Mammary epithelial cell (primary cell): ENCODE measurements at regions of chr9 and their contacts with region 1.

Region 1: GRCh38 chr9:95127249-95128176 is 190.0 kb downstream of the FANCC start:
- DNase-seq: peak; percentile 65
- H3K4me3 ChIP-seq: peak overlapping the region; percentile 6 to 44 (median 29)
- H3K27ac ChIP-seq: no peak overlapping the region
- H3K4me1 ChIP-seq: peaks cover 5% of the 10 kb centered on the region
- H3K27me3 ChIP-seq: no peaks in the 10 kb centered on the region
- CTCF ChIP-seq: peak; percentile 94 to 100

Region 2: GRCh38 chr9:94554439-94555391 is 572.8 kb before region 1 on chr9 and contains the start of gene PCAT7:
- CTCF ChIA-PET with region 1: no interaction called
- dilution Hi-C with region 1: no loop called
- in situ Hi-C with region 1: no loop called
- intact Hi-C with region 1: loop called (anchors 1 kb)
- DNase-seq: no peak
- H3K4me3 ChIP-seq: no peak within 1 kb of the TSS
- H3K27ac ChIP-seq: no peak within 1 kb of the TSS
- H3K4me1 ChIP-seq: no peaks in the 10 kb centered on the region
- H3K27me3 ChIP-seq: no peaks in the 10 kb centered on the region
- CTCF ChIP-seq: peak; percentile 19 to 52
- total RNA-seq, gene PCAT7: 0.17 TPM in 1 of 2 donors, not detected in the other

Region 3: DNA sequence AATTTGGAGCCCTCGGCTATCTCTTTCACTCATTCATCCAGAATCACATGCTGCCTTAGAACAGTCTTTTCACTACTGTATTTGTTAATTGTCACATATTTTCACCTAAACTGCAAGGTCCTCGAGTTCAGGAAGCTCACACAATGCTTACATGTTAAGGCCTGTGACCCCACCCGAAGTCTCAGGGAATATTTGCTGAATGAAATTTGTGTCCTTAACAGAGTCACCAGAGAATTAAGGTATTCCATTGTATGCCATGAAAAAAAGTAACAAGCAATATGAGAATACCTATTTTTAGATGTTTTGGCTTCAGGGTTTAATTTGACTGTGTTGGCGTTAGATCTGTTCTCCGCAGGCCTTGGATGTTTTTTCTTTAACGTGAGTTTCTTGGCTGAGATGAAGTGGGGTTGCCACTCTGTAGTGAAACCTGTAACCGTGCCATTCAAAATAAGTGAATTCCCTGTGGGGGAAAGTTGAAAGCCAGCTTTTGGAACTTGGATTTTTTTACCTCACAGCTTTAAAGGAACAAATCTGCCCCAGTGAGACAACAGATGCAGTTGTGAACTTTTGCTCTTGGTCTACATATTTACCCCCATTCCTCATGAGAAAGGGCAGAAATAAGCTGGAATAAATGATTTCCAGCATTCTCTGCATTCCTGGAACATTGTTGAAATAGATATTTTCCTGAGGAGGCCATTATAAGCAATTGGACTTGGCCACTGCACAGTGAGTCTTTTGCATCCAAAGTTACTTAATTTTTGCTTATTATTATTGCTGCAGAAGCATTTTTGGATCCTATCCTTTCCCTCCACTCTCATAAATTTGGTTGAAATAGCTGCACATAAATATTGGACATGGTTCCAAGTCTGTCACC is 452.3 kb before region 1 on chr9:
- CTCF ChIA-PET with region 1: no interaction called
- dilution Hi-C with region 1: loop called (anchors 25 kb)
- in situ Hi-C with region 1: loop called (anchors 5 kb)
- intact Hi-C with region 1: no loop called
- DNase-seq: no peak
- H3K4me3 ChIP-seq: no peak overlapping the region
- H3K27ac ChIP-seq: peak overlapping the region; percentile 6
- H3K4me1 ChIP-seq: peaks cover 22% of the 10 kb centered on the region
- H3K27me3 ChIP-seq: no peaks in the 10 kb centered on the region
- CTCF ChIP-seq: no peak

Region 4: DNA sequence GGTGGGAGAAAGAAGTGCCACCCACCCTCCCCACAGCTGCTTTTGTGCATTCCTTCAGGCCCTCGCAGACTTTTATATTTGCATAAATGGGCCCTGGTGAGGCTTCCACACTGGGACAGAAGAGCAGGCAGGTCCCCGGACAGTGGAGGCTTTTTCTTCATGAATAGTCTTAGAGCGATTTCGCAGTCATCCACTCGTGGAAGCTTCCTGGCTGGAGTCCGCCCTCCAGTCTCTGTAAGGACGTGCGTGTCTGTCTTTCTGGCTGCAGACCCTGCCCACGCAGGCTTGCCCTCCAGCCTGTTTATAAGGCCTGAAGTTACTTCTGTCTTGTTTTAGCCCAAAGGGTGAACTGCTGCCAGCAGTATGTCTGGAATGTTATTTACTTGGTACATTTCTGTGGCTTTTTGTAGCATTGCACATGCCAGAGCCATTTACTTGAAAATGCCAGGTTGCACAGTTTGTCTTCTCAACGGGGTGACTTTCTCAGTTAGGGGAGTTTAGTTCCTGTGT is 205.4 kb before region 1 on chr9:
- CTCF ChIA-PET with region 1: no interaction called
- dilution Hi-C with region 1: no loop called
- in situ Hi-C with region 1: no loop called
- intact Hi-C with region 1: loop called (anchors 5 kb)
- DNase-seq: peak; percentile 69
- H3K4me3 ChIP-seq: no peak overlapping the region
- H3K27ac ChIP-seq: peak overlapping the region; percentile 62
- H3K4me1 ChIP-seq: peaks cover 64% of the 10 kb centered on the region
- H3K27me3 ChIP-seq: no peaks in the 10 kb centered on the region
- CTCF ChIP-seq: no peak

Region 5: GRCh38 chr9:95048225-95049087 is 79.1 kb before region 1 on chr9:
- CTCF ChIA-PET with region 1: no interaction called
- dilution Hi-C with region 1: no loop called
- in situ Hi-C with region 1: no loop called
- intact Hi-C with region 1: loop called (anchors 2 kb)
- DNase-seq: peak; percentile 83
- H3K4me3 ChIP-seq: peak overlapping the region; percentile 61 to 66 (median 65)
- H3K27ac ChIP-seq: peak overlapping the region; percentile 78
- H3K4me1 ChIP-seq: peaks cover 15% of the 10 kb centered on the region
- H3K27me3 ChIP-seq: no peaks in the 10 kb centered on the region
- CTCF ChIP-seq: no peak

Region 6: GRCh38 chr9:95092262-95093072 is 35.0 kb before region 1 on chr9:
- CTCF ChIA-PET with region 1: interaction called, 6 read pairs
- dilution Hi-C with region 1: no loop called
- in situ Hi-C with region 1: no loop called
- intact Hi-C with region 1: loop called (anchors 2 kb)
- DNase-seq: peak; percentile 98
- H3K4me3 ChIP-seq: no peak overlapping the region
- H3K27ac ChIP-seq: peak overlapping the region; percentile 54
- H3K4me1 ChIP-seq: peaks cover 29% of the 10 kb centered on the region
- H3K27me3 ChIP-seq: no peaks in the 10 kb centered on the region
- CTCF ChIP-seq: no peak